ENCODE measurements at regions of chr2 and their contacts with region 1.

Region 1: DNA sequence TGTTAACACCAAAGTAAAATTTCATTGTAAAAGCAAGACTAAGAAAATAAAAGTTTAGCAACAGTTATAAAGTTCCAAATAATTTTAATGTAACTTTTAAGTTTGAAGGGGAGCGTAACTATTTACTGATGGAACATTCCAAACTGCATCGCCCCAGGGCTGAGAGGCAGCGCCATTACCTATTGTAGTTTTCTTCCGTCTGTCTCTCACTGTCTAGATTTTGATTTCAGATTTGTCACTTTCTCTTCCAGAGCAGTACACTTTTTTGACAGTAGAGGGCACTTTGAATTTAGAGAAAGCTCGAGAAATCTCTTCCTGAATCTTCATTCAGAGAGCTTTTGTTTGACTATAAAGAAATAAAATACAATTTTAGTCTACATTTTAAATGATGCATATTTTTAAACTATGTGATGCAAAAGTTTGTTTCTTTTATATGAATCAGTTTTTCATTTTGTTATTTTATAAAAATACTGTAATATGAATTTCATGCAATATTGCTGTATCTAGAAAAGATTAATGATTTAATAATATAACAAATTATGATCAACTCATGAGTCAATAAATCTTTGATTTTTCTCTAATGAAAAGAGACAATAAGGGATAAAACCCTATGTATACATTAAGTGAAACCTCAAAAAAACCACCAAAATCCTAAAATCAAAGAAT is 389.8 kb downstream of the FIGN start:
- DNase-seq: peak; percentile 9 to 40 (median 12)
- ATAC-seq: no peak
- H3K4me3 ChIP-seq: no peak overlapping the region
- H3K27ac ChIP-seq: no peak overlapping the region
- H3K4me1 ChIP-seq: no peaks in the 10 kb centered on the region
- H3K27me3 ChIP-seq: no peaks in the 10 kb centered on the region
- CTCF ChIP-seq: peak in 2 of 3 experiments; percentile 46 to 54; a peak in 4 of 6 replicates
- EP300 ChIP-seq: no peak
- POLR2A ChIP-seq: no peak
- RAD21 ChIP-seq: peak; percentile 59 to 66

Region 2: DNA sequence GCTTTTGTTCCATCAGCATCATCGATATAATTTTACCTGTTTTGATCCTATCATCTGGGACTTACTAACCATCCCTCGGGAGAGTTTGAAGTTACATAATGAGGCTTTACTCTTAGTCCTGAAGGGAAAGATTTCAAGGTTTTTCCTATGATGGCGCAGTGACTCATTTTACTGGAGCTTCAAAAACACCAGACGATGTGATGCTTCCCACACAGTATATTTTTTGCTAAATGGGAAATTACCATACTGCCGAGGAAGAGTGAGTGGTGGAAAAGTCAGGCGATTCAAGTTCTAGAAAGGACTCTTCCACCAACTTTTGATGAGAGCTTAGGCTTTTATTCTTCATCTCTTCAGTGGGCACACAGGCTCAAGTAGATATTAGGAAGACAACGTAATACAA is 1149.4 kb before region 1 on chr2:
- CTCF ChIA-PET with region 1: no interaction called
- POLR2A ChIA-PET with region 1: no interaction called
- in situ Hi-C with region 1: no loop called
- intact Hi-C with region 1: no loop called
- DNase-seq: no peak
- ATAC-seq: no peak
- H3K4me3 ChIP-seq: no peak overlapping the region
- H3K27ac ChIP-seq: no peak overlapping the region
- H3K4me1 ChIP-seq: no peaks in the 10 kb centered on the region
- H3K27me3 ChIP-seq: no peaks in the 10 kb centered on the region
- CTCF ChIP-seq: no peak
- EP300 ChIP-seq: no peak
- POLR2A ChIP-seq: no peak
- RAD21 ChIP-seq: no peak

Region 3: GRCh38 chr2:163207693-163208370 is 138.2 kb before region 1 on chr2:
- CTCF ChIA-PET with region 1: no interaction called
- POLR2A ChIA-PET with region 1: no interaction called
- in situ Hi-C with region 1: no loop called
- intact Hi-C with region 1: no loop called
- DNase-seq: no peak
- ATAC-seq: no peak
- H3K4me3 ChIP-seq: no peak overlapping the region
- H3K27ac ChIP-seq: no peak overlapping the region
- H3K4me1 ChIP-seq: no peaks in the 10 kb centered on the region
- H3K27me3 ChIP-seq: no peaks in the 10 kb centered on the region
- CTCF ChIP-seq: no peak
- EP300 ChIP-seq: no peak
- POLR2A ChIP-seq: no peak
- RAD21 ChIP-seq: no peak

Region 4: DNA sequence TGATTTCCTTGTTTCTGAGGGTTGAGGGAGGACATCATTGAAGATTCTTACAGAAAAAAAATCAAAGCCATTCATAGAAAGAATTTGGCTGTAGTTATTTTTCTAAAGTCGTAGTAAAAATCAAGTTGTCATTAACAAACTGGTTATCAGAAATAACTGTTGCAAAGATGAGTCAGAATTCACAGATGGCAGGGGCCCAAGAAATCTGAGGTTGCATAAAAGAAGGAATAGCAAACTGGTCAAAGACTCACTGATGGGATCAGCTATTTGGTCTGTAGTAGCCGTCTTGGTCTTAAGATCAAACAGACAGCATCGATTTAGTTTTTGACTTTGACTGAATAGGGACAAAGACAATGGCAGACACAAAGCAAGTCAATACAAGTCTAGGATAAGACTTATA is 55.4 kb after region 1 on chr2:
- CTCF ChIA-PET with region 1: no interaction called
- POLR2A ChIA-PET with region 1: no interaction called
- in situ Hi-C with region 1: no loop called
- intact Hi-C with region 1: no loop called
- DNase-seq: no peak
- ATAC-seq: no peak
- H3K4me3 ChIP-seq: no peak overlapping the region
- H3K27ac ChIP-seq: no peak overlapping the region
- H3K4me1 ChIP-seq: no peaks in the 10 kb centered on the region
- H3K27me3 ChIP-seq: no peaks in the 10 kb centered on the region
- CTCF ChIP-seq: no peak
- EP300 ChIP-seq: no peak
- POLR2A ChIP-seq: no peak
- RAD21 ChIP-seq: no peak

Region 5: GRCh38 chr2:164061129-164061746 is 715.2 kb after region 1 on chr2:
- CTCF ChIA-PET with region 1: no interaction called
- POLR2A ChIA-PET with region 1: no interaction called
- in situ Hi-C with region 1: no loop called
- intact Hi-C with region 1: loop called (anchors 2 kb)
- DNase-seq: peak; percentile 3 to 18 (median 10)
- ATAC-seq: no peak
- H3K4me3 ChIP-seq: no peak overlapping the region
- H3K27ac ChIP-seq: no peak overlapping the region
- H3K4me1 ChIP-seq: no peaks in the 10 kb centered on the region
- H3K27me3 ChIP-seq: no peaks in the 10 kb centered on the region; a peak in 1 of 5 replicates
- CTCF ChIP-seq: peak in 2 of 3 experiments; percentile 30 to 35; a peak in 2 of 6 replicates
- EP300 ChIP-seq: no peak
- POLR2A ChIP-seq: no peak
- RAD21 ChIP-seq: peak in 1 of 2 experiments; percentile 33; a peak in 2 of 4 replicates

Region 6: DNA sequence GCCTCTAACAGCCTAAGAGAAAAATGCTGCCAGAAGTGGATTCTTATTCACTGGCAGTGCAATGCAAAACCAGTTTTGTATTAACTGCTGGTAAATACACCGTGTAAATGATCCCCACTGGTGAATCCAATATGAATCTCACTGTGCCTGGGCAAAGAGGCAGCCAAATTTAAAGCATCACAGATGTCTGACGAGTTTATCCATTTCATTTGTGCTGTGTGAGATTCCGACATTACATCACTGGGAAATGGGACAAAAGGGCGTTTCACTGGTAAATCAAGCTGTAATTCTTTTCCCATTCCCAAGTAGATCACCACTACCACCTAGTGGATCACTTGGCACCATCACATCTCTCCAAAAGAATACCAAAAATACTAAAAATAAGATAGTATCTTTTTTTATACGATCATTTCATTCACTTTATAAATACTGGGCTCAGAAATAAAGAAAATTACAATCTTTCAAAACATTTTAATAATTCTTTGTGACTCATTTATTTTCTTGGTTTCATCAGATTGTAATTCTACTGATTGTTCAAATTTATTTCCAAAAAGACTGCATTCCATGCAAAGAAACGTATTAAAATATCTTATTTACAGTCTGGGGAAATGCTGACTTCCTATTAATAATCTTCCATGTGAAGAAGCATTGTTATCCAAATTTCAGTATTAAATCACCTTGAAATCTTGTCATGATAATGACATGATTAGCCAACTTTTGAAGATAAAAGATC is 1149.6 kb after region 1 on chr2:
- CTCF ChIA-PET with region 1: no interaction called
- POLR2A ChIA-PET with region 1: no interaction called
- in situ Hi-C with region 1: loop called (anchors 25 kb)
- intact Hi-C with region 1: no loop called
- DNase-seq: peak in 1 of 4 experiments; percentile 9
- ATAC-seq: no peak
- H3K4me3 ChIP-seq: no peak overlapping the region
- H3K27ac ChIP-seq: no peak overlapping the region
- H3K4me1 ChIP-seq: no peaks in the 10 kb centered on the region
- H3K27me3 ChIP-seq: no peaks in the 10 kb centered on the region
- CTCF ChIP-seq: peak in 2 of 3 experiments; percentile 10 to 28; a peak in 3 of 6 replicates
- EP300 ChIP-seq: no peak
- POLR2A ChIP-seq: no peak
- RAD21 ChIP-seq: peak; percentile 23 to 37; a peak in 2 of 4 replicates

Measured in K562 (cell line).